ENCODE measurements at regions of chr12 and their contacts with region 1.

Region 1: DNA sequence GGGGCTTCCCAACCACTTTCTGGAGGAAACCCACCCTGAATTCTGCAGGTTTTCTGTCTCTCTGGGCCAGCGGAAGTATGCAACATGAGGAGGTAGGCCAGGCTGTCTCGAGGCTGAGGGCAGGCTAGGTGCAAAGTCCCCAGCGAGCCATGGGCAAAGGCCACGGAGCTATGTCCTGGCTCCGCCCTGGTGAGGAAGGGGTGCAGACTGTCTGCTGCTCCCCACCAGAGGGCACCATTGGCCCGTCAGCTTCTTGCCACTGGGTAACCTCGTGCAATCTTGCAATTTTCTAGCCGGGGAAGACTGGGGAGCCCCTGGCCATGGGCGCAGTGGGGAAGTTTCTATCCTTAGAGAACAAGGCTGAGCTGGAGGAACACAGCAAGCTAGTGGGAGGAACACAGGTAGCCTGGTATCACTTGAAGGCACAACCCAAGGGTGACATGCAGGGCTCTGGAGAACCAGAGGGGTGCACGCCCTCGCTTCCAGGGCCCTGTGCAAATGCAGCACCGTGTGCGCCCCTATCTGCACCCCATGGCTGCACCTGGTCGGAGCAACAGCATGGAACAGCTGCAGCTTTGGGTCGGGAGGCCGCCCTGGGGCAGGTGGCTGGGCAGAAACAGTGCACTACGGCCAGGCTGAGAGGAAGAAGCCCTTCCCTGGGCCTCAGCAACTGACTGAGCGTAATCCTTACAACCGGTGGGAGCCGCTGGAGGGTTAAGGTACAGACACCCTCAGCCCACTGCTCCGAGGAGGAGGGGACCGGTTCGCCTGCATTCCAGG is 27.6 kb upstream of the RPLP0 start:
- DNase-seq: peak; percentile 94
- H3K4me3 Mint-ChIP-seq: peak overlapping the region; percentile 3
- H3K27ac Mint-ChIP-seq: peak overlapping the region; percentile 93
- H3K4me1 Mint-ChIP-seq: peaks cover 79% of the 10 kb centered on the region
- H3K27me3 Mint-ChIP-seq: no peaks in the 10 kb centered on the region

Region 2: DNA sequence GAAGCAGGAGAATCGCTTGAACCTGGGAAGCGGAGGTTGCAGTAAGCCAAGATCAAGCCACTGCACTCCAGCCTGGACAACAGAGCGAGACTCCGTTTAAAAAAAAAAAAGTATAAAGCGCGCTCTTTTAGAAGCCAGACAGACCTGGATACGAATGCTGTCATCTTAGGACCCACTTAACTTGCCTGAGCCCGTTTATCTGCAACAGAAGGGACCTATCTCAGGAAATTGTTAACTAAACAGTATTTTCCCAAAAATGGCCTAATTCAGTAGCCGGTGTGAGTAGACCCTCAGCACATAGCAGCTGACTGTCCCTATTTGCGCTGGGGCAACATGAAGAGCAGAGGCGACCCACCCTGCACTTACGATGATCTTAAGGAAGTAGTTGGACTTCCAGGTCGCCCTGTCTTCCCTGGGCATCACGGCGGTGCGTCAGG is 28.1 kb before region 1 on chr12:
- CTCF ChIA-PET with region 1: interaction called, 45 read pairs
- POLR2A ChIA-PET with region 1: interaction called, 65 read pairs
- intact Hi-C with region 1: loop called (anchors 1 kb)
- DNase-seq: no peak
- H3K4me3 Mint-ChIP-seq: peak overlapping the region; percentile 96
- H3K27ac Mint-ChIP-seq: peak overlapping the region; percentile 99
- H3K4me1 Mint-ChIP-seq: peaks cover 41% of the 10 kb centered on the region
- H3K27me3 Mint-ChIP-seq: no peaks in the 10 kb centered on the region

Region 3: DNA sequence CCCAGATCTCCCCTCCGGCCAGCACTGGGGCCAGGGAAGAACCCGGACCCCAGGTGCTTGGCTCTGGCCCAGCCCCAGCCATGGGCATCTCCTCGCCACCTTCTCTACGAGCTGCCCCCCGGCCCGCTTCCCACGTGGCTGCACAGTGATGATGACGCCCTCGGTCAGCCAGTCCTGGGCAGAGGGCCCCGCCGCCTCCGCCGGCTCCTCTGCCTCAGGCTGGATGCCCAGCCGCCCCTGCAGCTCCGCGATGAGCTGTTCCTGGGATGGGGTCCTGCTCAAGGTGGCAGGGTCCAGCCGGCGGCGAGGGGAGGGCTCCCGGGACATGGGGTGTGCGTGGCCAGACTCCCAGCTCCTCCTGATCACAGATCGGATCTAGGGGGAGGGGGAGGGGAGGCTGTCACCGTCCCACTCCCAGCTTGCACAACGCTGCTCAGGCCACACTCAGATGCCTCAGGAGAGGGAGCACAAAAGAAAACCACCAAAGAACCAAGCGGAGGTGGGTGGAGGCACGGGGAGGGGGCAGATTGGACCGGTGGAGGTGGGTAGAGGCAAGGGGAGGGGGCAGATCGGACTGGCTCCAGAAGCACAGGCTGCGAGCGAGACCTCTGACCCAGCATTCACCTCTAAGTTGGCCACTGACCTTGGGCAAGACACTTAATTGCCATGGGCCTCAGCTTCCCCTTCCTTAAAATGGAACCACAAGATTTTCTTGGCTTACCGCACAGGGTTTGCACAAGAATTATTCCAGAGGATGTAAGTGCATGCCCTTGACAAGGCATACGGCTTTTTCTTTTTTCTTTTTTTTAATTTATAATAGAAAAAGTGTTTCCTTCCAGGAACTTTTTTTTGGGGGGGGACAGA is 11.5 kb before region 1 on chr12:
- CTCF ChIA-PET with region 1: interaction called, 33 read pairs
- POLR2A ChIA-PET with region 1: no interaction called
- intact Hi-C with region 1: no loop called
- DNase-seq: no peak
- H3K4me3 Mint-ChIP-seq: no peak overlapping the region
- H3K27ac Mint-ChIP-seq: no peak overlapping the region
- H3K4me1 Mint-ChIP-seq: no peaks in the 10 kb centered on the region
- H3K27me3 Mint-ChIP-seq: no peaks in the 10 kb centered on the region

Region 4: DNA sequence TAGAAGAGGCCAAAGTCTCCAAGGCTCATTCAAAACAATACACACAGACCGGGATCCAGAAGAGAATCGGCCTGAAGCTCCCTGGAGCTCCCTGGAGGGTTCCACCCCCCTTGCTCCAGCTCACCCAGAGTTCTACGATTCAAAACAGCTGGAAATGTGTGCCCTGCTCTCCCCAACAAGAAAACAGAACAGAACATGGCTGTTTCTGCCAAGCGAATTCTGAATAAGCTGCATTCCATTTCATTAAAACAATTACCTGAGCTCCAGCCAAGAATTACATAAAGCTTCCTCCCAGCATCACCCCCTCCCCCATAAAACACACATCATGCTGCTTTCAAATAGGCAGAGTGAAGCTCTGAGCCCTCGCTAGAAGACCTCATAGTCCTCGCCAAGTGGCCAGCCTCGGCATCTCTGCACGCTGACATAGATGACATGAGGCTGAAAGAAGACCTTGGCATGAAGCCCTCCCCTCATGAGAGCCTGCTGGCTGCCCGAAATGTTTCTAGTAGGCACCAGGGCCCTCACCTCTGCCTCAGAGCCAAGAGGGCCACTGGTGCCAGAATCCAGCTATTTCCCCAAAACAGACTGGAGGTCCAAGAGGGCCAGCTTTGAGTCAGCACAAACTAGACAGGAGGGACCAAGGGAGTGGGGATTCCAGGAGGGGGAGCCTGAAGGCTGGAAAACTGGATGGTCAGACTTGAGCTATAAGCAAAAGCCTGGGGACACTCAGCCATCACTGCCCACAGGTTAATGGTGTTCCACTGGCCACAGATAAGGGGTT is 28.8 kb after region 1 on chr12:
- CTCF ChIA-PET with region 1: interaction called, 614 read pairs
- POLR2A ChIA-PET with region 1: interaction called, 20 read pairs
- intact Hi-C with region 1: loop called (anchors 1 kb)
- DNase-seq: no peak
- H3K4me3 Mint-ChIP-seq: no peak overlapping the region
- H3K27ac Mint-ChIP-seq: peak overlapping the region; percentile 78
- H3K4me1 Mint-ChIP-seq: peaks cover 81% of the 10 kb centered on the region
- H3K27me3 Mint-ChIP-seq: no peaks in the 10 kb centered on the region

Region 5: DNA sequence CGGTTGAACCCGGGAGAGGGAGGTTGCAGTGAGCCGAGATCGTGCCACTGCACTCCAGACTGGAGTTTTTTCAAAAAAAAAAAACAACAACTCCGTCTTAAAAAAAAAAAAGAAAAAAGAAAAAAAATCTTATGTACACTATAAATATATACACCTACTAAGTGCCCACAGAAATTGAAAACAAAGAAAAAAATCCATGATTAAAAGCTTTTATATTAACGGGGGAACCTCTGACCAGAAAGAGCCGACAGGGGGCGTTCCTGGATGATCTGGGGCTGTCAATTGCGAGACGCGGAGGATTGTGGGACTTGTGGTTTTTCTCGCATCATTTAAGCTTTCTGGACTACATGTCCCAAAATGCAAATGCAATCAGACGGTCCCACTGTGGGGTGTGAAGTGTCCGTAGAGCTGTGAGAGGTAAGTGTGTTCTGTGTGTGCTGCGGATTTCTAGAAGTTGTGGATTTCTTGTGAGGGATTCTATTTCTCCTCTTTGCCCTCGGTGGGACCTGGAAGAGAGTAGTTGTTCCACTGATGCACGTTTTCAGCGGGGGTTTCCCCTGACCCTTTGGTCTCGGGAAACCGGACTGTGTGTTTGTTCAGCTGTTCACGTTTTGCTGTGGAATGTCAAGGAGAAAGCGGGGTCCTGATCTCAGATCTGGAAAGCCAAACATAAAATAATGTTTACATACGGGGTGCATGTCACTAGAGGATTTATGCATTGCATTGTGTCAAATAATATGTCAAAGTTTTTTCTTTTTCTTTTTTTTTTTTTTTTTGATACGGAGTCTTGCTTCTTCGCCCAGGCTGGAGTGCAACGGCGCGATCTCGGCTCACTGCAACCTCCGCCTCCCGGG is 73.7 kb after region 1 on chr12 and contains the start of gene SIRT4:
- CTCF ChIA-PET with region 1: interaction called, 14 read pairs
- POLR2A ChIA-PET with region 1: no interaction called
- intact Hi-C with region 1: no loop called
- DNase-seq: peak; percentile 92
- H3K4me3 Mint-ChIP-seq: peak within 1 kb of the TSS; percentile 90
- H3K27ac Mint-ChIP-seq: peak within 1 kb of the TSS; percentile 70
- H3K4me1 Mint-ChIP-seq: peaks cover 8% of the 10 kb centered on the region
- H3K27me3 Mint-ChIP-seq: no peaks in the 10 kb centered on the region
- total RNA-seq, gene SIRT4: 1.8 to 2.0 TPM

Region 6: DNA sequence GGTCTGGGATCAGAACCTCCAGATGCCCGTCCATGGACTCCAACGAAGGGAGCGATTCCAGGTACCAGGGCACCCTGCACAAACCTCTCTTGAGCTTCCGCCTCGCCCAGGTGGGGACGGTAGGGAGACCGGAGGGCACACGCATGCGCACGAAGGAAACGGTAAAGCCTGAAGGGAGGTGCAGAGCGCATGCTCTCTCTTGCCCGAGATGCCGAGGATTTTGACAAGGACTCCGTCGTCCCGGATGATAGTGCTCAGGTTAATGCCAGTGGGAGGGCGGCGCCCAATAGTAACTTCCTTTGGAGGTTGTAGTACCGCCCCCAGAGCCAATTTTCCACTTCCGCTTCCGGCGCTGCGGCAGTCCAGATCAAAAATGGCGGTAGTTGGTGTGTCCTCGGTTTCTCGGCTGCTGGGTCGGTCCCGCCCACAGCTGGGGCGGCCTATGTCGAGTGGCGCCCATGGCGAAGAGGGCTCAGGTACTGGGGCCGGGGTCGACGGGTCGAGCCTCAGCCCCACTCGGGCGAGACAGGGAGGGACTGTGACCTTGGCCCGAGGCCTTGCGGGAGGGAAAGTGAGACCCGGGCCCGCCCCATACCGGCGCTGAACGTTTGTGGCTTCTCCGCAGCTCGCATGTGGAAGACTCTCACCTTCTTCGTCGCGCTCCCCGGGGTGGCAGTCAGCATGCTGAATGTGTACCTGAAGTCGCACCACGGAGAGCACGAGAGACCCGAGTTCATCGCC is 209.4 kb after region 1 on chr12 and contains the start of gene COX6A1:
- CTCF ChIA-PET with region 1: interaction called, 4 read pairs
- POLR2A ChIA-PET with region 1: no interaction called
- intact Hi-C with region 1: loop called (anchors 2 kb)
- DNase-seq: peak; percentile 99
- H3K4me3 Mint-ChIP-seq: peak within 1 kb of the TSS; percentile 99
- H3K27ac Mint-ChIP-seq: peak within 1 kb of the TSS; percentile 92
- H3K4me1 Mint-ChIP-seq: peaks cover 22% of the 10 kb centered on the region
- H3K27me3 Mint-ChIP-seq: peaks cover 2% of the 10 kb centered on the region
- total RNA-seq, gene COX6A1: 474 to 478 TPM